ENCODE measurements at regions of chr19 and their contacts with region 1.

Region 1: DNA sequence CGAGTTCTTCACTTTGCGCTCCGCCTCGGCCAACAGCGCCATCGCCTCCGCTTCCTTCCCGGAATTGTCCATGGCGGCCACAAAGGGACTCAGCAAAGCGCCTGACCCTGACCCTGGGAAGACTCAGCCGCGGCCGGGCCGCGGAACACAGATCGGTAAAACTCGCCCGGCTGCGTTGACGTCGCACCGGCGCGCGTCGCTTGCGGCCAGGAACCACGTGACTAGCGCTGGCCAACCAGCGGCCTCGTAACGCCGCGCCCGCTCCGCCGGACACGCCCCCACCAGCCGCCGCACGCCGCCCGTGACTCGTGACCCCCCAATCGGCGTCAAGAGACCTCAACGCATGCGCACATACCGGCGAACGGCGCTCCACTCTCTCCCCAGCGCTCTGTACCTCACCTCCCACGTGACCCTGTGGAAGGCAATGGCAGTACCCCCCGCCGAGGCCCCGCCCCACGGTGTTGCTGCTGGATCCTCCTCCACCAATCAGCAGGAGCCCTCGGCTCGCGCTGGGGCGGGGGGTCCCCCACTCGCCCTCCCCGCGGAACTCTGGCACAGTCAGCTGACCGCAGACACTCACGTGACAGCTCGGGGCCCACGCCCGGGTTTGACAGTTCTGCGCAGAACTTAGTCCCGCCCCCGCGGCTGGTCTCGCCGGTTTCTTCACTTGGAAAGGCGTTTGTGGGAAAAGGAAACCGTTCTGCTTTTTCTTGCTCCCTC is at the start of gene NAPA:
- DNase-seq: peak; percentile 100
- H3K4me3 Mint-ChIP-seq: peak within 1 kb of the TSS; percentile 99
- H3K27ac Mint-ChIP-seq: peak within 1 kb of the TSS; percentile 100
- H3K4me1 Mint-ChIP-seq: peaks cover 39% of the 10 kb centered on the region
- H3K27me3 Mint-ChIP-seq: no peaks in the 10 kb centered on the region
- CTCF ChIP-seq: no peak
- total RNA-seq, gene NAPA: 72.1 and 73.2 TPM in 2 replicates

Region 2: DNA sequence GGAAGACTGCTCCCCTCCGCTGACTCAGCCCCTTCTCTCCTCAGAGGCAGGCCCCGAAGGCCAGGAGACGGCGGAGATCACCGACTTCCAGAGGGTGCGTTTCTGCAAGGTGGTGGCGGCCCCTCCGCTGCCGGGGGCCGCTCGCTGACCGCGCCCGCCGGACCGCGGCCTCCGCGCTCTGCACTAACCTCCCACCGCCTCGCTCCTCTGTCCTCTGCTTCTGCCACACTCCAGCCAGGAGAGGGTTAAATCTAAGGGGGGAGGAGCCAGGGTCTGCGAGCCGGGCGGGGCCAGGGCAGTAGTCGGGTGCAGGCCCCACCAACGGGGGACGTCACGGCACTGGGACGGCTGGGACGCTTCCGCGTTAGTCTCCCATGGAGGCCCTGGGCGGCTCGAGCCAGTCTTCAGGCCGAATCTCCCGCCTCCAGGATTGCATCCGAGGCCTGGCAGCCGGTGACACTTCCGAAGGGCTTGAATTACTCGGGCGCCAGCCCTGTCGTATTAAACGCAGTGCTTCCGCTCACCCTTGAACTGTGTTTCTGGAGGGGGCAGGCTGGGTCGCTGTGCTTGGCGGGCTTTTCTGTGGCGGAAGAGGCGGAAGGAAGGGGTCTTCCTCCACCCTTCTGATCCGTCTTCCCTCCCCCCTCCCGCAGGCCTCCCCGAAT is 241.6 kb before region 1 on chr19:
- CTCF ChIA-PET with region 1: no interaction called
- POLR2A ChIA-PET with region 1: no interaction called
- intact Hi-C with region 1: no loop called
- DNase-seq: peak; percentile 89
- H3K4me3 Mint-ChIP-seq: peak overlapping the region; percentile 79
- H3K27ac Mint-ChIP-seq: peak overlapping the region; percentile 77
- H3K4me1 Mint-ChIP-seq: peaks cover 16% of the 10 kb centered on the region
- H3K27me3 Mint-ChIP-seq: no peaks in the 10 kb centered on the region
- CTCF ChIP-seq: no peak

Region 3: DNA sequence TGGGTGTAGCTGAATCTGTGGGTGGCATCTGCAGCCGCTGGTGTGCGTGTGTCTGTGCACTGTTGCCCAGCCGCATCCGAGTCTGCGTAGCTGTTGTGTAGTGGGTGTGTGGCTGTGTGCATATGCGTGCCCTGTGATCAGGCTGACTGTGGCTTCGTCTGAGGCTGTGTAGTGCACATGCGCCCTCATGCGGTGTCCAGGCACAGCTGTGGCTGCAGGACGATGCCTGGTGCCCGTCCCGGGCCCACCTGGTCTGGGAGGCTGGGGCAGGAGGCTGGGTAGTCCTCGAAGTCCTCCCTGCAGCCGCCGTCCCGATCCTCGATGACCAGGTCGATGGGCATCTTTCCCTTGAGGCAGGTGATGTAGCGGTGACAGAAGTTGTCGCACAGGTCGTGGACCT is 100.6 kb before region 1 on chr19:
- CTCF ChIA-PET with region 1: no interaction called
- POLR2A ChIA-PET with region 1: no interaction called
- intact Hi-C with region 1: no loop called
- DNase-seq: peak; percentile 57
- H3K4me3 Mint-ChIP-seq: no peak overlapping the region
- H3K27ac Mint-ChIP-seq: no peak overlapping the region
- H3K4me1 Mint-ChIP-seq: peaks cover 25% of the 10 kb centered on the region
- H3K27me3 Mint-ChIP-seq: peaks cover 37% of the 10 kb centered on the region
- CTCF ChIP-seq: no peak

Region 4: GRCh38 chr19:47456721-47457478 is 58.1 kb before region 1 on chr19:
- CTCF ChIA-PET with region 1: no interaction called
- POLR2A ChIA-PET with region 1: no interaction called
- intact Hi-C with region 1: no loop called
- DNase-seq: no peak
- H3K4me3 Mint-ChIP-seq: no peak overlapping the region
- H3K27ac Mint-ChIP-seq: no peak overlapping the region
- H3K4me1 Mint-ChIP-seq: no peaks in the 10 kb centered on the region
- H3K27me3 Mint-ChIP-seq: peaks cover 17% of the 10 kb centered on the region
- CTCF ChIP-seq: no peak

Region 5: GRCh38 chr19:47494729-47495128 is 20.3 kb before region 1 on chr19:
- CTCF ChIA-PET with region 1: interaction called, 10 read pairs
- POLR2A ChIA-PET with region 1: interaction called, 4 read pairs
- intact Hi-C with region 1: no loop called
- DNase-seq: no peak
- H3K4me3 Mint-ChIP-seq: no peak overlapping the region
- H3K27ac Mint-ChIP-seq: no peak overlapping the region
- H3K4me1 Mint-ChIP-seq: peaks cover 6% of the 10 kb centered on the region
- H3K27me3 Mint-ChIP-seq: no peaks in the 10 kb centered on the region
- CTCF ChIP-seq: no peak

Region 6: GRCh38 chr19:47529018-47529742 is 14.2 kb after region 1 on chr19:
- CTCF ChIA-PET with region 1: interaction called, 12 read pairs
- POLR2A ChIA-PET with region 1: interaction called, 11 read pairs
- intact Hi-C with region 1: no loop called
- DNase-seq: no peak
- H3K4me3 Mint-ChIP-seq: no peak overlapping the region
- H3K27ac Mint-ChIP-seq: no peak overlapping the region
- H3K4me1 Mint-ChIP-seq: no peaks in the 10 kb centered on the region
- H3K27me3 Mint-ChIP-seq: no peaks in the 10 kb centered on the region
- CTCF ChIP-seq: no peak

Region 7: GRCh38 chr19:47600246-47601179 is 85.5 kb after region 1 on chr19:
- CTCF ChIA-PET with region 1: interaction called, 9 read pairs
- POLR2A ChIA-PET with region 1: interaction called, 82 read pairs
- intact Hi-C with region 1: loop called (anchors 1 kb)
- DNase-seq: peak; percentile 100
- H3K4me3 Mint-ChIP-seq: peak overlapping the region; percentile 97
- H3K27ac Mint-ChIP-seq: peak overlapping the region; percentile 97
- H3K4me1 Mint-ChIP-seq: peaks cover 30% of the 10 kb centered on the region
- H3K27me3 Mint-ChIP-seq: no peaks in the 10 kb centered on the region
- CTCF ChIP-seq: no peak

Region 8: DNA sequence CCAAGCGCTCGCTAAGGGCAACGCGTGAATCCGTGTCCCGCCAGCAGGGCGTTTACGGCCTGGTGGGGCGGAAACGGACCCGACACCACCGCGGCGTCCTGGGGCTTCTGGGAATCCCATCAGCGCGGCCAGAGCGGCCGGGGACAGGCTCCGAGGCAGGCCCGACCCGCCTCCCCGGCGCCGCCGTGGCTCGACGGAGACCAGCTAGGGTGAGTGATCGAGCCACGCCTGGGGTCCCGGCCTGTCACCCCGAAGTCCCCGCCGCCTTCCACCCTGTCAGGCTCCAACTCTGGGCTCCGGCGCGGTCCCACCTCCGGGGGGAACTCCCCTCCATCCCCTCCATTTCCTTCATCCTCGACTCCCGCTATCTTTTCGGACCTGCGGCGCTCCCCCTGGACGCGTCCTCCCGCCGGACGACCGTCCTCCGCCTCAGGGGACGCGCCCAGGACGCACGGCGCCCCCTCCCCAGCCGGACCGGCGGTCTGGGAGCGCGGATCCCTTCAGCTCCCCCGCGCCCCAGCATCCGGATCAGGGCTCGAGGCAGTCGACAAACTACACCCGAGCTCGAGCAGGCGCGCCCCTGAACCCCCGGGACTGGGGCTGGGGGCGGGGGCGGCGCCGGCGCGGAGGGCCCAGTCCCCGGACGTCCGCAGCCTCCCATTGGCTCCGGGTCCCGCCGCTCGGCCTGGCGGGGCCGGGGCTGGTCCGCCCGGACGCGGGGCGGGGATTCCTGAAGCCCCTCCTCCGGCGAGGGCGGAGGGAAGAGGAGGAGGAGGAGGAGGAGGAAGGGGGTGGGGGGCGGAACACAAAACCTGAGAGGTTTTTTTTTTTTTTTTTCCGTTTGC is 93.3 kb after region 1 on chr19:
- CTCF ChIA-PET with region 1: interaction called, 5 read pairs
- POLR2A ChIA-PET with region 1: interaction called, 23 read pairs
- intact Hi-C with region 1: loop called (anchors 1 kb)
- DNase-seq: peak; percentile 96
- H3K4me3 Mint-ChIP-seq: peak overlapping the region; percentile 84
- H3K27ac Mint-ChIP-seq: peak overlapping the region; percentile 75
- H3K4me1 Mint-ChIP-seq: peaks cover 15% of the 10 kb centered on the region
- H3K27me3 Mint-ChIP-seq: no peaks in the 10 kb centered on the region
- CTCF ChIP-seq: no peak

Region 9: DNA sequence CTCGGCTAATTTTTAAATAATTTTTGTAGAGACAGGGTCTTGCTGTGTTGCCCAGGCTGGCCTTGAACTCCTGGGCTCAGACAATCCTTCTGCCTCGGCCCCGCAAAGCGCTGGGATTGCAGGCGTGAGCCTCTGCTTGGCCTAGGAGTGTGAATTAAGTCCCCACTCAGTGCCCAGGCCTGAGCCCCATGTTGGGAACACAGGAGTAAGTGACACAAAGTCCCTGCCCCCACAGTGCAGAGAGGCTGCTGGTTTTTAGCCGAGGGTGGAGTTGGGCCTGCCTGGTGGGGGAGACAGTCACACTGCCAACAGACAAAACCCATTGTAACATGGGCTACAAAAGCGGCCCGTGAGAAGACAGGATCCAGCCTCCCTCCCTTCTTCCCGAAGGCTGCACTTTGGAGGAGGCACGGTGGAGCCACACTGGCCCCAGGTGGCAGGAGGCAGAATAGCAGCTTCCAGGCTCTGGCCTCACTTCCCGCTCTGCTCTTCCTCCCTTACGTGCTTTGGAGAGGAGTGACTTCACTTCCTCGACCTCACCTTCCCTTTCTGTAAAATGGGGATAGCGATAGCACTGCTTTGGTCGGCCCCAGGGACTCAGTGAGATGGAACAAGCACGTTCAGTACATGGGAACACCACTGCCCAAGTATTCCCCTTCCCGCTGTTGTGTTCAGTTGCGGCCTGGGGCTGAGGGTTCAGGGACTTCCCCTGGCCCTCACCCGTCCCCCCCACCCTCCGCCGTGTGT is 183.0 kb after region 1 on chr19:
- CTCF ChIA-PET with region 1: interaction called, 4 read pairs
- POLR2A ChIA-PET with region 1: interaction called, 5 read pairs
- intact Hi-C with region 1: loop called (anchors 1 kb)
- DNase-seq: peak; percentile 89
- H3K4me3 Mint-ChIP-seq: no peak overlapping the region
- H3K27ac Mint-ChIP-seq: no peak overlapping the region
- H3K4me1 Mint-ChIP-seq: no peaks in the 10 kb centered on the region
- H3K27me3 Mint-ChIP-seq: no peaks in the 10 kb centered on the region
- CTCF ChIP-seq: peak; percentile 99